ENCODE measurements at regions of chr3 and their contacts with region 1.

Region 1: DNA sequence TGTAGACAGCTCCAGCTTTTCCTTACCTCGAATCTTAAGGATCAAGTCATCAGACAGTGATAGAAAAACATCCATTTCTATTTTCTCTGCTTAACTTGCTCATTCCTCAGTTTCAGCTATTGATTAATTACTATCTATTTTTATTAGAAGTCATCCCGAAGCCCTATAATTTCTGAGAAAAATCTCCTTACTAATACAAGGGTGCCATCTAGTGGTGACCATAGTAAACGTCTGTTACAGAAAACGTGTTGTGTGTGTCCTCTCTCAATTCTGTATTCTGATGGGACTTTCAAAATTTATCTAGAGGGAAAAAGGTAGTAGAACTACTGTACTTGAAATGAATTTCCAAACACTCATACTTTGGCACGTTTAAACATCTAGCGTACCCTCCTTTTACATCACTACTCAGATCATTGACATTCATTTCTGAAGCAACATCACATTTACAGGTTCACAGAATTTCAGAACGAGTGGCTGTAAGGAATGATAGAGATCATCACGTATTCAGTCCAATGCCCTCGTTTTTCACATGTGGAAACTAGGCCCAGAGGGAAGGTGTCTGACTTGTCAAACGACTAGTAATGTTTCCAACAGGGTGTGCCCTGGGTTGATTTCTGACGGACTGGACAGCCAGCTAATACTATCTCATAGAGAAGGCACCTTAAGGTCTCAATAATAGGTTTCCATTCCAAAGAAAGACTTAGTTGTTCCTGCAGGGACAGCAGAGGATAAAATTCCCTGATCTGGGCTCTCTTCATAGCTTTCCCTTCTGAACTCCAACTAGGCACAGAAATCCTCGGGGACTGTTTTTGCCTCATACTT is 25.6 kb downstream of the HACD2 start:
- DNase-seq: peak; percentile 56
- CTCF ChIP-seq: peak; percentile 61

Region 2: DNA sequence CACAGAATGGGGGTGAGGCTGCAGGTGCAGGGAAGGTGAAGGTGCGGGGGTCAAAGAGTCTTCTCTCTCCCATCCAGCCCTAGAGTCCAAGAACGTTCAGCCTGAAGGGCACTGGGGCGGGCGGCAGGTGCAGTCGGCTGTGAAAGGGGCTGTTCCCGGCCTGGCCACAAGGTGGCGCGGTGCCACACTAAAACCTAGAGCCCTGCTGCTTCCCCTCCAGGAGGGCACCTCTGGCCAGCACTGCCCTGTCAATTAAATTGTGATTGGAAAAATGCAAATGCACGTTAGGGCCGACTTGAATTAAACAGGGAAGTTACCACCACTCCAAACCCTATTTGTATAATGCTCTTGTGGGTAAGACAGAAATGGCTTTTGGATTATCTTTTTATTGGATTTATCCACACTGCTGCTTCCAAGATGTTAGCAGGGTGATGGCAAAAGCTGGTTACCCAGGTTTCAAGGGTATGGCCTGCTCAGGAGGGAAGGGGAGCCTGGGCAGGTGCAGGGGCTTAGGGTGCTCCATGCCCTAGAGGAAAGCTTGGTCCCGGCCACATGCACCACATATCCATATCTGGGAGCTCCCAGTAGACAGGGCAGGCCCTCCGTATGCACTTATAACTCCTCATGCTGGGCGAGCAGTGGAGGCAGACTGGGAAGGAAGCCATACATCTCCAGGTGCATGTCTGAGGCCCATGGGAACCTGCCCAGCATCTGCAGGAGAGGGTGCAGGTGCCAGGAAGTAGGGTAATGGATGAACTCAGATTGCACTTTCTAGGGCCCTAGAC is 230.2 kb before region 1 on chr3:
- CTCF ChIA-PET with region 1: interaction called, 74 read pairs
- POLR2A ChIA-PET with region 1: no interaction called
- DNase-seq: peak; percentile 85
- CTCF ChIP-seq: peak; percentile 95

Region 3: GRCh38 chr3:123352134-123352890 is 206.9 kb before region 1 on chr3:
- CTCF ChIA-PET with region 1: no interaction called
- POLR2A ChIA-PET with region 1: no interaction called
- DNase-seq: no peak
- CTCF ChIP-seq: no peak

Region 4: DNA sequence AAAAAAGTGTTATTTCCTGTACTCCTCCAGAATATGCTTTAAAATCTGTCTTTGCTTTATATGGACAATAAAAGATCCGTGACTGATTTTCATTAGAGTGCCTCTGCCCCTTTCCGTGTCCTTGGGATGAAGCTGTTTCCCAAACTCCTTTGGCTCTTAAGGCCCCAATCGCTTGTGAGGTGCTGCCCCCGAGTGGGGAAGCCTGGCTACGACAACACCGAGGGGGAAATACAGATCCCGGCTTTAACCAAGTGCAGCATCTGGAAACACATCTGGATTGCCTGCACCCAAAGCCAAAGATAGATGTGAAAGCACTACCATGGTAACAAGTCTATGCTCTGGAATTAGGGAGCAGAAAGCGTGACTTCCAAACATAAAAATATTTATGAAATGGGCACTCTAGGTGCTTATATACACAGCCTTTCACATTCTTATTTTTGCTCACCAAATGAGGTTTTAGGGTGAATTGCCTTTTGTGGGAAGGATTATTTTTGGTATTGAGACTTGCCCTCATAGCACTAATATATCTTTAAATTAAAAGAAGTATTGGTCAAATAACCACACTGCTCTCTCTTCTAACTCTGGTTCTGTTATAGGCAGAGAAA is 69.7 kb before region 1 on chr3:
- CTCF ChIA-PET with region 1: interaction called, 13 read pairs
- POLR2A ChIA-PET with region 1: no interaction called
- DNase-seq: peak; percentile 62
- CTCF ChIP-seq: peak; percentile 90

Region 5: GRCh38 chr3:123533554-123534159 is 25.6 kb before region 1 on chr3:
- CTCF ChIA-PET with region 1: interaction called, 36 read pairs
- POLR2A ChIA-PET with region 1: no interaction called
- DNase-seq: no peak
- CTCF ChIP-seq: no peak

Region 6: DNA sequence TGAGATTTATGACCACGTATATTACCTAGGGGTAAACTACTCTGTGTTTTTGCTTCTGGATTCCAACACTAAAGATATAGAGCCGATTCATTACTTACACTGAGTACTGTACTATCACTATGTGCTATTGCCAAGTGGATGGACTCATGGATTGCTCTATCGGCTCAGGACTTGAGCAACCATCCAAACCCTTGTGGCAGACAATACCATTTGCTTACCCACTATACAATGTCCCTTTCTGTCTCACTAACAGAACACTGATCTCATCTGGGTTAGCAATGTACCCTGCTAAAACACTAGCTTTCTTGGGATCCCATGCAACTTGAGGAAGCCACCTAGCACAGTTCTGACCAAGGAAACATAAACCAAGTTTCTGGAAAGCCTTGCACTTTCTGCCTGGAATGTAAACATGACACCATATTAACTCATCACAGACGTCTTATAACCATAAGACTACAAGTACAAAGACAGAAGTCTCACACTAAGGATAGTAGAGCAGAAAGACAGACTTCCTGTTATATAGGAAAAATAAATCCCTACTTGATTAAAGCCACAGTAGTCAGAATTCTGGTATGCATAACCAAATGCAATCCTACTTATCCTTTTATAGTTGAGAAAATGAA is 13.0 kb before region 1 on chr3:
- CTCF ChIA-PET with region 1: interaction called, 61 read pairs
- POLR2A ChIA-PET with region 1: no interaction called
- DNase-seq: no peak
- CTCF ChIP-seq: no peak

Region 7: DNA sequence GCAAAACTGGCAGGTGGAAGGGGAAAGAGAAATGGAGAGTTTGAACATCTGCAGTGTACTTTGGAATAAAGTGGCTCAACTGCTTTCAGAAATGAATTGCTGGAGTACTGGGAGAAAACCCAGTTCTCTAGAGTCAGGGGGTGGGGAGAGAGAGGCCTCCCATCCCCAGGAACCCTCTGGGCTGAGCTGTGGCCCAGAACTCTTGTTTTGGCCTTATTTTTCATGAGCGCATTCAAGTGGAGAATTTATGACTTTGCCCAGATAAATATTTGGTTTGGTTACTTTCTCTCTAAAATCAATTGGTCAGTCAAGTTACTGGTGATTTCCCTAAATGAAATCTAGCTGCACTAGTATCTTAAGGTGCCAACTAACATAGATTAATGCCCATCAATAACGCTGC is 54.3 kb after region 1 on chr3:
- CTCF ChIA-PET with region 1: no interaction called
- POLR2A ChIA-PET with region 1: no interaction called
- DNase-seq: no peak
- CTCF ChIP-seq: no peak

Region 8: GRCh38 chr3:123700791-123701722 is 141.8 kb after region 1 on chr3:
- CTCF ChIA-PET with region 1: no interaction called
- POLR2A ChIA-PET with region 1: no interaction called
- DNase-seq: no peak
- CTCF ChIP-seq: no peak

Region 9: GRCh38 chr3:124234852-124235252 is 675.6 kb after region 1 on chr3:
- CTCF ChIA-PET with region 1: no interaction called
- POLR2A ChIA-PET with region 1: no interaction called
- DNase-seq: no peak
- CTCF ChIP-seq: no peak

Measured in GM10248 (cell line).